Heart right ventricle (tissue), 16 donors: ENCODE measurements at regions of chr15 and their contacts with region 1.

Region 1: DNA sequence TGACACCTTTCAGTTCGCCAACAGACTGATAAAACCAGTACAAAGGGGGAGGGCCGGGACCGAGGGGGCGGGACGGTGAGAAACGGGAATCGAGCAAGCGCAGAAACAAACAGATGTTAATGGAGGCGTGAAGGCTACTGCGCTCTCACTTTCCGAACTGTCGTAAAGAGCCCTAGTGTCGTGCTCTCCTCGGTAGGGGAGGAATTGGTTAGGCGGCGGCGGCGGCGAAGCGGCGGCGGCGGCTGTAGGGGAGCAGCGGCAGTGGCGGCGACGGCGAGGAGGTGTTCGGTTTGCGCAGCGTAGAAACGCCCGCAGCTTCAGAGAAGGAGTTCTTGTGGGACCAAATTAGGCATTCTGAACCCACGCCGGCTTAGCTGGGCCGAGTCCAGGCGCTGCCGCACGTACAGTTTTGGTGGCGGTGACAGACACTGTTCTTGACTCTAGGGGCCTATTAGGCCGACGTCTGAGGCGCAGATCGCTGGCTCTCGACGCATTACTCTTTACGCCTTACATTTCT is at the start of gene RNF111:
- DNase-seq: peak; percentile 84 to 94
- ATAC-seq: peak; percentile 95 to 98 (median 98)
- H3K4me3 ChIP-seq: peak within 1 kb of the TSS; percentile 66 to 98 (median 84)
- H3K27ac ChIP-seq: peak within 1 kb of the TSS; percentile 49 to 96 (median 90)
- H3K4me1 ChIP-seq: peaks cover 0 to 30% (median 19%) of the 10 kb centered on the region in 9 donors
- H3K27me3 ChIP-seq: no peaks in the 10 kb centered on the region
- CTCF ChIP-seq: no peak
- total RNA-seq, gene RNF111: 21.2 to 28.7 (median 24.4) TPM

Region 2: DNA sequence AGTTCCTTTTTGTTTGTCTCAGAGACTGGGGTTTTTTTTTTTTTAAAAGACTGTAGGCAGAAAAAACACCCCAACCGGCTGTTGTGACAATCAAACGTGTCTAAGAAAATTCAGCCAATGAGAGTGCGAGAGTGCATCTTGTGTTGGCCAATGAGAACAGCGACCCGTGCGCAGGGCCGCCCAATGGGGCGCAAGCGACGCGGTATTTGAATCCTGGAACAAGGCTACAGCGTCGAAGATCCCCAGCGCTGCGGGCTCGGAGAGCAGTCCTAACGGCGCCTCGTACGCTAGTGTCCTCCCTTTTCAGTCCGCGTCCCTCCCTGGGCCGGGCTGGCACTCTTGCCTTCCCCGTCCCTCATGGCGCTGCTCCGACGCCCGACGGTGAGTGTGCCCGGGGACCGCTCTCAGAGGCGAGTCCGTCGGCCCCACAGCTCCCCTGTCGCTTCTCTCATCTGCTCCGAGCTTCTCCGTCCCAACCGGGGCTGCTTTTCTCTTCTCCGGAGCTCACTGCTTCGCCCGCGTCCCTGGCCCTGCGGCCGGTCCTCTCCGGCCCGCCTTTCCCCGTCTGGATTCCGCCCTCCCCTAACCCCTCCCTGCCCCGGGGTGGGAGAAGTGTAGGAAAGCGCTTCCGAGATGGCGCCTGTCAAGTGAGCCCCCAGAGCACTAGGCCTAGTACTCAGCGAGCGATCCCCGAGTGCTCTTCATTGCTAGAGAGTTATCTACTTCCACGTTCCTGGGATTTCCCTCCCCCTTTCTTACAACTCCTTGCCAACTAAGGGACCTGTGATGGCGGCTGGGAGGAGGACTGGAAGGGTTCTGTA is 117.6 kb after region 1 on chr15 and contains the start of gene CCNB2:
- intact Hi-C with region 1: loop called in 2 of 10 experiments (anchors 10 kb)
- DNase-seq: peak; percentile 79 to 86
- ATAC-seq: peak; percentile 99 to 100 (median 100)
- H3K4me3 ChIP-seq: peak within 1 kb of the TSS; percentile 52 to 81 (median 64)
- H3K27ac ChIP-seq: peak within 1 kb of the TSS in 3 of 10 donors; percentile 28 to 80 (median 41)
- H3K4me1 ChIP-seq: peaks cover 2 to 14% (median 7%) of the 10 kb centered on the region in 9 donors
- H3K27me3 ChIP-seq: no peaks in the 10 kb centered on the region
- CTCF ChIP-seq: no peak
- total RNA-seq, gene CCNB2: 0.16 to 5.9 (median 0.62) TPM in 9 of 10 donors, not detected in the other

Region 3: GRCh38 chr15:59138243-59138642 is 150.7 kb after region 1 on chr15:
- intact Hi-C with region 1: loop called in 1 of 10 experiments (anchors 10 kb)
- DNase-seq: peak; percentile 20 to 40
- ATAC-seq: peak in 4 of 8 donors; percentile 55 to 67 (median 61)
- H3K4me3 ChIP-seq: no peak overlapping the region
- H3K27ac ChIP-seq: no peak overlapping the region
- H3K4me1 ChIP-seq: peaks cover 0 to 9% (median 6%) of the 10 kb centered on the region in 9 donors
- H3K27me3 ChIP-seq: no peaks in the 10 kb centered on the region
- CTCF ChIP-seq: peak in 7 of 9 donors; percentile 35 to 59 (median 47)

Region 4: DNA sequence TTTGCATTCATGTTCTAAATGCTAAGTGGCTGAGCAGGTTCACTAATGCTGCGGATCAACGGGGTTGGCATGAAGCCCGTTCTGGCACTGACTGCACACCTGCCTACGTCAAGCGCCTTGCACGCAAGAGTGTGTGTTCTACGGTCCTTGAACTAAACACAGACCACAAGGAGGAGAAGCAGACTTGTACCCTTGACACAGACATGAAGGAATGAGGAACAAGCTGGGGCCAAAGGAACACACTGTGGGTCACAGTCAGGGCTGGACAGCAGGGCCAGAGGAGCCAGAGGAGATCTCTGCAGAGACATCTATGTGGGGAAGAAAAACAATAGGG is 171.1 kb after region 1 on chr15:
- intact Hi-C with region 1: loop called in 1 of 10 experiments (anchors 10 kb)
- DNase-seq: no peak
- ATAC-seq: no peak
- H3K4me3 ChIP-seq: no peak overlapping the region
- H3K27ac ChIP-seq: no peak overlapping the region
- H3K4me1 ChIP-seq: no peaks in the 10 kb centered on the region
- H3K27me3 ChIP-seq: no peaks in the 10 kb centered on the region
- CTCF ChIP-seq: no peak

Region 5: GRCh38 chr15:59313641-59314332 is 326.2 kb after region 1 on chr15:
- intact Hi-C with region 1: no loop called
- DNase-seq: peak; percentile 57 to 63
- ATAC-seq: peak; percentile 8 to 90 (median 80)
- H3K4me3 ChIP-seq: no peak overlapping the region
- H3K27ac ChIP-seq: peak overlapping the region in 3 of 10 donors; percentile 8 to 23 (median 13)
- H3K4me1 ChIP-seq: peaks cover 10 to 55% (median 37%) of the 10 kb centered on the region in 9 donors
- H3K27me3 ChIP-seq: no peaks in the 10 kb centered on the region
- CTCF ChIP-seq: no peak

Region 6: DNA sequence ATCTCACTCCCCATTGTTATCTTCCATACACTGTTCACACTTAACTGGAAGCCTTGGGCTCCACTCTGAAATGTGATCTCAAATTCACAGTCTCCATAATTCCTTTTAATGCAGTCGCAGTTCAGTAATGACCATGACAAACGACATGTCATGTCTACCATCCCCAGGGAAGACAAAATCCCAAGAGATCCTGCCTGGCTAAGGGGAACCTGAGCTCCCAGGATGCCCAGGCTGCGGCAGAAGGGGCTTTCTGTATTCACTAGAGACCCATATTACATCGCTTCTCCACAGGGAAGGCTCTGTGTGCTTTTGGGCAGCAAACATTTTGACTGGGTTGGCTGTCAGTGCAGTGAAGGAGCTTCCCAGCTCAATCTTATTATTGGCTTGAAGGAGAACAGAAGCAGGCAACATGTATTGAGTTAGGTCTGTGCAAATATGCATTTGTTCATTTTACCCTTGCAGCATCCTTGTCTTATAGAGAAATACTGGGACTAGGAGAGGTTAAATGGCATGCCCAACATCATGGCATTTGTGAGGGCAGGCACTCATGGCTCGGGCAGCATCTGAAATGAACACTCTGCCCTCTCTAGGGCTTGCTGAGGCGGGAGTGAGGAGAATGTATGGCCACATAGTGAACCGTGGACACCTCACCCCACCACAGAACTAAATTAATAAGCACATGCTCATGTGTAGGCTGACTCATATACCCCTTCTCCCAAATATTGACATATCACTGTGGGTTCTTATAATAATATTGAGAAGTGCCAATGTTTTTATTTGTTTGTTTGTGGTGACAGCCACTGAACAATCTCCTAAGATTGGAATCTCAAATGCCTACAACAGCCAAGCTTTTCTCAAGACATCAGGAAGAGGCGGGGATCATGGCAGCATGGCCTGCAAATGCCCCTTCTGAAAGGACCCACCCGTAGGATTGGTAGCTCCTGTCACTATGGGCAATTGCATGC is 874.9 kb after region 1 on chr15:
- intact Hi-C with region 1: no loop called
- DNase-seq: no peak
- ATAC-seq: no peak
- H3K4me3 ChIP-seq: no peak overlapping the region
- H3K27ac ChIP-seq: no peak overlapping the region
- H3K4me1 ChIP-seq: no peaks in the 10 kb centered on the region
- H3K27me3 ChIP-seq: peaks cover 0 to 58% (median 34%) of the 10 kb centered on the region in 7 donors
- CTCF ChIP-seq: no peak